Activated B cell treated with CpG ODN at 0.5 μM for 24 hours (primary cell): ENCODE measurements at regions of chr6 and their contacts with region 1.

Region 1: GRCh38 chr6:27188885-27189418 is 58.5 kb upstream of the PRSS16 start:
- DNase-seq: no peak
- ATAC-seq: peak; percentile 80
- H3K4me3 Mint-ChIP-seq: peak overlapping the region; percentile 83
- H3K27ac Mint-ChIP-seq: peak overlapping the region; percentile 19
- H3K4me1 Mint-ChIP-seq: peaks cover 8% of the 10 kb centered on the region
- H3K27me3 Mint-ChIP-seq: peaks cover 2% of the 10 kb centered on the region
- CTCF ChIP-seq: no peak

Region 2: GRCh38 chr6:25793970-25794369 is 1395.0 kb before region 1 on chr6:
- CTCF ChIA-PET with region 1: no interaction called
- POLR2A ChIA-PET with region 1: no interaction called
- intact Hi-C with region 1: no loop called
- DNase-seq: no peak
- ATAC-seq: no peak
- H3K4me3 Mint-ChIP-seq: no peak overlapping the region
- H3K27ac Mint-ChIP-seq: no peak overlapping the region
- H3K4me1 Mint-ChIP-seq: no peaks in the 10 kb centered on the region
- H3K27me3 Mint-ChIP-seq: peaks cover 5% of the 10 kb centered on the region
- CTCF ChIP-seq: no peak

Region 3: GRCh38 chr6:27157459-27158315 is 31.3 kb before region 1 on chr6:
- CTCF ChIA-PET with region 1: no interaction called
- POLR2A ChIA-PET with region 1: no interaction called
- intact Hi-C with region 1: loop called (anchors 2 kb)
- DNase-seq: peak; percentile 60
- ATAC-seq: peak; percentile 80
- H3K4me3 Mint-ChIP-seq: peak overlapping the region; percentile 89
- H3K27ac Mint-ChIP-seq: peak overlapping the region; percentile 81
- H3K4me1 Mint-ChIP-seq: peaks cover 33% of the 10 kb centered on the region
- H3K27me3 Mint-ChIP-seq: no peaks in the 10 kb centered on the region
- CTCF ChIP-seq: no peak

Region 4: GRCh38 chr6:27205375-27206278 is 16.7 kb after region 1 on chr6:
- CTCF ChIA-PET with region 1: no interaction called
- POLR2A ChIA-PET with region 1: no interaction called
- intact Hi-C with region 1: no loop called
- DNase-seq: no peak
- ATAC-seq: no peak
- H3K4me3 Mint-ChIP-seq: no peak overlapping the region
- H3K27ac Mint-ChIP-seq: no peak overlapping the region
- H3K4me1 Mint-ChIP-seq: peaks cover 15% of the 10 kb centered on the region
- H3K27me3 Mint-ChIP-seq: peaks cover 38% of the 10 kb centered on the region
- CTCF ChIP-seq: no peak

Region 5: DNA sequence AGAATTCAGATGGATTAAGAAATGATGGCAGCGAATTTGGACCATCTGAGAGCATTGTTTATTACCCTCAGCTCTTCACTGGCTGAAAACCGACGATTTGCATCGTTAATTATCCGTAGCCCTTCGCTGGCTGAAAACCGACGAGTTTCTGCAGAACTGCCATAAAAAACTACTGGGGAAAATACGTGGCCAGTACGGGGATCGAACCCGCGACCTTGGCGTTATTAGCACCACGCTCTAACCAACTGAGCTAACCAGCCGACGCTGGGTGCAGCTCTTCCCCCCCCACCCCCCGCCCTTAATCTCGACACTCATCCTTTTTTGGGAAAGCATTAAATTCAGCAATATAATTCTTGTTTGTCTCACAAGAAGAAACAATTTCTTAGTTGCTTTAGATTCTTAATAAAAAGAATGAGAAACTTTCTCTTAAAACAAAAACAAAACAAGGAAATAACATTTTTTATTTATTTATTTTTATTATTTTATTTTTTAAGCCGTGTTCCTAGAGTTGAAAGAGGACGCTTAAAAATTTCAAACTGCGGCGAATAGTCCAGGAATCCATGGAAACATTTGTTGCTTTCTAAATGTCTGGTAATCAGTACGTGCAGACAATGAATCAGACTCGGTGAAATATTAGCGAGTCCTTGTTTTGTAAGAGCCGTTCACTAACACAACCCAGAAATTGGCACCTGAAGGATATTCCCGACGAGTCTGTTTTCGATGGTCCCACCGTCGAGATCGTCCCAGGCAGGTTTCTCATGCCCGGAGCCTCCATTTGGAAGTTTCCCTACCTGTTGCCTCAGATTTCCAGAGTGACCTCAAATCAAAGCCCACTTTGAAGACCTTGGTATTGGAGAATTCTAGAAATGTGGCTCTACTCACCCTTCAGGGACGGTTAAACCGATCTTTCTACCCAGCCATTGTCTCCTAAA is 86.3 kb after region 1 on chr6:
- CTCF ChIA-PET with region 1: no interaction called
- POLR2A ChIA-PET with region 1: no interaction called
- intact Hi-C with region 1: no loop called
- DNase-seq: no peak
- ATAC-seq: no peak
- H3K4me3 Mint-ChIP-seq: no peak overlapping the region
- H3K27ac Mint-ChIP-seq: no peak overlapping the region
- H3K4me1 Mint-ChIP-seq: peaks cover 5% of the 10 kb centered on the region
- H3K27me3 Mint-ChIP-seq: peaks cover 57% of the 10 kb centered on the region
- CTCF ChIP-seq: no peak

Region 6: GRCh38 chr6:27608916-27609883 is 420.2 kb after region 1 on chr6:
- CTCF ChIA-PET with region 1: no interaction called
- POLR2A ChIA-PET with region 1: no interaction called
- intact Hi-C with region 1: loop called (anchors 1 kb)
- DNase-seq: no peak
- ATAC-seq: no peak
- H3K4me3 Mint-ChIP-seq: no peak overlapping the region
- H3K27ac Mint-ChIP-seq: no peak overlapping the region
- H3K4me1 Mint-ChIP-seq: peaks cover 7% of the 10 kb centered on the region
- H3K27me3 Mint-ChIP-seq: peaks cover 47% of the 10 kb centered on the region
- CTCF ChIP-seq: no peak

Region 7: GRCh38 chr6:27795697-27796494 is 606.9 kb after region 1 on chr6:
- CTCF ChIA-PET with region 1: interaction called, 13 read pairs
- POLR2A ChIA-PET with region 1: no interaction called
- intact Hi-C with region 1: loop called (anchors 1 kb)
- DNase-seq: no peak
- ATAC-seq: peak; percentile 60
- H3K4me3 Mint-ChIP-seq: no peak overlapping the region
- H3K27ac Mint-ChIP-seq: peak overlapping the region; percentile 50
- H3K4me1 Mint-ChIP-seq: peaks cover 21% of the 10 kb centered on the region
- H3K27me3 Mint-ChIP-seq: peaks cover 6% of the 10 kb centered on the region
- CTCF ChIP-seq: no peak

Region 8: DNA sequence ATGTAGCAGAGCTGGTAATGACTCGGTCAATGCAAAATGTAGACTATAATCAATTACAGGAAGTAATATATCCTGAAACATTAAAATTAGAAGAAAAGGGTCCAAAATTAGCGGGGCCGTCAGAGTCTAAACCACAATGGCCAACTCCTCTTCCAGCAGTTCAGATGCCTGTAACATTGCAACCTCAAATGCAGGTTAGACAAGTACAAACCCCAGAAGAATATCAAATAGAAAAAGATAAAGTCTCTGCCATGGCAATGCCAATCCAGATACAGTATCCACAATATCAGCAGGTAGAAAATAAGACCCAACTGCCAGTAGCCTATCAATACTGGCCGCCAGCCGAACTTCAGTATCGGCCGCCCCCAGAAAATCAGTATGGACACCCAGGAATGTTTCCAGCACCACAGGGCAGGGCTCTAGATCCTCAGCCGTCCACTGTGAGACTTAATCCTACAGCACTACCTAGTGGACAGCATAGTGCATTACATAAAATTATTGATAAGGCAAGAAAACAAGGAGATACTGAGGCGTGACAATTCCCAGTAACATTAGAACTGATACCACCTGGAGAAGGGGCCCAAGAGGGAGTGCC is 1495.1 kb after region 1 on chr6:
- CTCF ChIA-PET with region 1: no interaction called
- POLR2A ChIA-PET with region 1: no interaction called
- intact Hi-C with region 1: loop called (anchors 5 kb)
- DNase-seq: no peak
- ATAC-seq: no peak
- H3K4me3 Mint-ChIP-seq: no peak overlapping the region
- H3K27ac Mint-ChIP-seq: no peak overlapping the region
- H3K4me1 Mint-ChIP-seq: peaks cover 3% of the 10 kb centered on the region
- H3K27me3 Mint-ChIP-seq: peaks cover 66% of the 10 kb centered on the region
- CTCF ChIP-seq: no peak